HepG2 (cell line): ENCODE measurements at regions of chr4 and their contacts with region 1.

Region 1: GRCh38 chr4:6673660-6674499 is 19.8 kb upstream of the S100P start:
- DNase-seq: peak; percentile 90
- ATAC-seq: peak; percentile 77
- H3K4me3 ChIP-seq: peak overlapping the region; percentile 61 to 78 (median 68); a peak in 5 of 6 replicates
- H3K27ac ChIP-seq: peak overlapping the region; percentile 91
- H3K4me1 ChIP-seq: peaks cover 41% of the 10 kb centered on the region
- H3K27me3 ChIP-seq: no peaks in the 10 kb centered on the region
- CTCF ChIP-seq: peak; percentile 47
- EP300 ChIP-seq: no peak
- POLR2A ChIP-seq: peak in 1 of 2 experiments; percentile 35; a peak in 1 of 4 replicates
- RAD21 ChIP-seq: 0 out of 2 replicates have a peak, but pooled peaks have one; percentile 38

Region 2: DNA sequence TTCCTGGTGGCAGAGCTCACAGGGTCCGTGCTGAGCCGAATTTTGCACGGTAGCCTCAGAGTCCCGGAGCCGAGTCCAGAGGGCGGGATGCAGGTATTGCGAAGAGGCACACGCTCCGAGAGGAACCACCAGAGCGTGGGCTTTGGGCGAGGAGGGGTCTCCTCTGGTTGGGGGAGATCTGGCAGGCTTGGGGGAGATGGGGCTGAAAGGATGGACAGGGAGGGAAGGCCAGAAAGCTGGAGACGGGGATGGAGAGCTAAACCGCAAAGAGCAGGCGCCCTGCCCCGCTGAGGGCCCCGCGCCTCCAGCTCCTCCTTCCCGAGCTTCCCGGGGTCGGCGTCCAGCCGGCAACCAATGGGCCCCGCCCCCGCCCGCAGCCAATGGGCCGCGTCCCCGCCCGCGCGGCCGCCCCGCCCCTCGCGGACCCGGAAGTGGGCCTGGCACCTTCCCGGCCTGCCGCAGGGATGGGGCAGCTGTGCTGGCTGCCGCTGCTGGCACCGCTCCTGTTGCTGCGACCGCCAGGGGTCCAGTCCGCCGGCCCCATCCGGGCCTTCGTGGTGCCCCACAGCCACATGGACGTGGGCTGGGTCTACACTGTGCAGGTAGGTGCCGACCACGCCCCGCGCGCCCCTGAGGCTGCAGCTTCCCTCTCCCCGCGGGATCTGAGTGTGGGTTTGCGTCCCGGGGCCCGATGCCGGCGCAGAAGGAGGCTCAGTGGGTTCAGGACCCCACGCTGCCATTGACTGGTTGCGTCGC is 99.0 kb before region 1 on chr4 and contains the start of gene MAN2B2:
- CTCF ChIA-PET with region 1: no interaction called
- POLR2A ChIA-PET with region 1: interaction called, 11 read pairs
- in situ Hi-C with region 1: no loop called
- intact Hi-C with region 1: no loop called
- DNase-seq: peak; percentile 66
- ATAC-seq: peak; percentile 95
- H3K4me3 ChIP-seq: peak within 1 kb of the TSS; percentile 87 to 98 (median 88)
- H3K27ac ChIP-seq: peak within 1 kb of the TSS; percentile 30
- H3K4me1 ChIP-seq: peaks cover 21% of the 10 kb centered on the region
- H3K27me3 ChIP-seq: peaks cover 2 to 27% of the 10 kb centered on the region in 2 experiments; a peak in 3 of 5 replicates
- CTCF ChIP-seq: no peak
- EP300 ChIP-seq: no peak
- POLR2A ChIP-seq: peak; percentile 79 to 81
- RAD21 ChIP-seq: peak; percentile 22; the same call in 1 of the 2 replicates
- total RNA-seq, gene MAN2B2: 2.8 and 5.4 TPM in 2 replicates

Region 3: DNA sequence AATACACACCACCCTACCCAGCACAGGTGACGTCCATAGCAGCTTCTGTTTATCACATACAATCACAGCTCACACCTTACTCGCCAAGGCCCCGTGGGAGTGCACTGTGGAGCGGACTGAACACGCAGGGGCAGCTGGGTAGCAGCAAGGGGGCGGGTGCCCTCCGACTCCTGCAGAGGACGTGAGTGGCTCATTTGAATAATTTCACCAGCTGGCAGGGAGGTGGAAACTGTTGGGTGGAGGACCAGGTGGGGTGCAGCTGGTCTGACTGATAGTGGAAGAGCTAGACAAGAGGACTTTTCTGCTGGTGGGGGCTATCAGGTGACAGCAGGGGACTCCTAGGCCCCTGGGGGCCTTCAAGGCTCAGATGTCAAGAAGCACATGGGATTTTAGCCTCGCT is 82.6 kb before region 1 on chr4:
- CTCF ChIA-PET with region 1: no interaction called
- POLR2A ChIA-PET with region 1: no interaction called
- in situ Hi-C with region 1: no loop called
- intact Hi-C with region 1: no loop called
- DNase-seq: no peak
- ATAC-seq: no peak
- H3K4me3 ChIP-seq: no peak overlapping the region
- H3K27ac ChIP-seq: no peak overlapping the region
- H3K4me1 ChIP-seq: no peaks in the 10 kb centered on the region
- H3K27me3 ChIP-seq: no peaks in the 10 kb centered on the region
- CTCF ChIP-seq: no peak
- EP300 ChIP-seq: no peak
- POLR2A ChIP-seq: no peak
- RAD21 ChIP-seq: no peak

Region 4: DNA sequence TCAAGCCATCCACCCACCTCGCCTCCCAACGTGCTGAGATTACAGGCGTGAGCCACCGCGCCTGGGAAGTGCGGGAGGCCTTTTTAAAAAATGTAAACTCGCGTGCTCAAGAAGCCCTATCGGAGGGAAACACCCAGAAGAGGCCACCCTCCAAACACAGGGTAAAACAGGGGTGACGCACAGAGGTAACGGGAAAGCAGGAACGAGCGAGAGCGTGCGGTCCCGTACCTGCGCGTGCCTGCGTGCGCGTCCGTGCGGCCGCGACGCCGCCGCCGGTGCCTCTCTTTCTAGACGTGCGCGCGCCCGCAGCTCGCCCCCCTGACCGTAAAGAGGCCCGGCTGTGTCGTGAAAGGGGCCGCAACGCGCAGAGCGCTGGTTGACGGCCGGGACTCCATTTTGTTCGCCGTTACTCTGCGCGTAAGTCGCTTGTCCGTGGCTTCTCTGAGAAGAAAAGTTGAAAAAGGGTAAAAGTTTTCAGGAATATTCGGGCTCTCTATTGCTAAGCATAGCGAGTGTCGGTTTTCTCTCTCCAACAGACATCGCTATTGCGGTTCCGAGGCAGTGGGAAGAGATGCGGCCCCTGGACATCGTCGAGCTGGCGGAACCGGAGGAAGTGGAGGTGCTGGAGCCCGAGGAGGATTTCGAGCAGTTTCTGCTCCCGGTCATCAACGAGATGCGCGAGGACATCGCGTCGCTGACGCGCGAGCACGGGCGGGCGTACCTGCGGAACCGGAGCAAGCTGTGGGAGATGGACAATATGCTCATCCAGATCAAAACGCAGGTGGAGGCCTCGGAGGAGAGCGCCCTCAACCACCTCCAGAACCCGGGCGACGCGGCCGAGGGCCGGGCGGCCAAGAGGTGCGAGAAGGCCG is 33.4 kb before region 1 on chr4 and contains the start of gene MRFAP1:
- CTCF ChIA-PET with region 1: no interaction called
- POLR2A ChIA-PET with region 1: interaction called, 36 read pairs
- in situ Hi-C with region 1: no loop called
- intact Hi-C with region 1: no loop called
- DNase-seq: peak; percentile 86
- ATAC-seq: peak; percentile 91
- H3K4me3 ChIP-seq: peak within 1 kb of the TSS; percentile 67 to 91 (median 74)
- H3K27ac ChIP-seq: peak within 1 kb of the TSS; percentile 84
- H3K4me1 ChIP-seq: peaks cover 38% of the 10 kb centered on the region
- H3K27me3 ChIP-seq: no peaks in the 10 kb centered on the region; a peak in 1 of 5 replicates
- CTCF ChIP-seq: no peak
- EP300 ChIP-seq: no peak; a peak in 1 of 4 replicates
- POLR2A ChIP-seq: peak; percentile 83 to 94
- RAD21 ChIP-seq: no peak
- total RNA-seq, gene MRFAP1: 158 and 254 TPM in 2 replicates

Region 5: GRCh38 chr4:6688879-6689505 is 15.1 kb after region 1 on chr4:
- CTCF ChIA-PET with region 1: interaction called, 10 read pairs
- POLR2A ChIA-PET with region 1: interaction called, 122 read pairs
- in situ Hi-C with region 1: no loop called
- intact Hi-C with region 1: loop called (anchors 2 kb)
- DNase-seq: peak; percentile 91
- ATAC-seq: peak; percentile 62
- H3K4me3 ChIP-seq: peak overlapping the region; percentile 49 to 74 (median 66); a peak in 5 of 6 replicates
- H3K27ac ChIP-seq: peak overlapping the region; percentile 94
- H3K4me1 ChIP-seq: peaks cover 75% of the 10 kb centered on the region
- H3K27me3 ChIP-seq: no peaks in the 10 kb centered on the region; a peak in 1 of 5 replicates
- CTCF ChIP-seq: peak; percentile 44
- EP300 ChIP-seq: peak in 1 of 2 experiments; percentile 53; a peak in 1 of 4 replicates
- POLR2A ChIP-seq: peak in 1 of 2 experiments; percentile 32; a peak in 2 of 4 replicates
- RAD21 ChIP-seq: no peak

Region 6: DNA sequence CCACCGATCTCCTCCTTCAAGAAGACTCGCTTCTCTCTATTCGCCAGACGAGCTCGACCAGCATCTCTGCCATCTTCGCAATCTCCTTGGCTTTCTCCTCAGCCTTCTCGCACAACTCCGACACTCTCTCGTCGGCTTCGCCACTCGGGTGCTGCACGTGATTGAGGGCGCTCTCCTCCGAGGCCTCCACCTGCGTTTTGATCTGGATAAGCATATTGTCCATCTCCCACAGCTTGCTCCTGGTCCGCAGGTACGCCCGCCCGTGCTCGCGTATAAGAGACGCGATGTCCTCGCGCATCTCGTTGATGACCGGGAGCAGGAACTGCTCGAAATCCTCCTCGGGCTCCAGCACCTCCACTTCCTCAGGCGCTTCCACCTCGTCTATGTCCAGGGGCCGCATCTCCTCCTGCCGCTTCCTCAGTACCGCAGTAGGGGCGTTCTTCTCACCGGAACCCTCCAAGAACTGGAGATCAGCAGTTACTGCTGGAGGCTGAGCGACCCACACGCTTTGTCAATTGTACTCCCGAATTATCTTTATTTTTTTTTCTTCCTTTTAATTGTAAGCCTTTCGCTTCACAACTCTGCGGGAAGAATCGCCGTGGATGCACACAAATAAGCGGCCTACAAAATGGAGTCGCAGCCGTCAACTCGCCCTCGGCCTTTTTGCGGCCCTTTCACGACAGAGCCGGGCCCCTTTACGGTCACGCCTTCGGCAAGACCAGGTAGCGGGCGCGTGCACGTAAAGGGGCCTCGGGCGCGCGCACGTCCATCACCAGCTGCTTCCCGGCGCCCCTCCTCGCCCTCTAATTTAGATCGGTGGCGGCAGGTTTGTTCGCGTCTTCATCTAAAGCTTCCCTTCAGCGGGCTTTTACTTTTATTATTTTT is 35.6 kb after region 1 on chr4 and contains the start of gene MRFAP1L1:
- CTCF ChIA-PET with region 1: no interaction called
- POLR2A ChIA-PET with region 1: interaction called, 19 read pairs
- in situ Hi-C with region 1: no loop called
- intact Hi-C with region 1: loop called (anchors 1 kb)
- DNase-seq: peak; percentile 91
- ATAC-seq: peak; percentile 88
- H3K4me3 ChIP-seq: peak within 1 kb of the TSS; percentile 64 to 92 (median 90)
- H3K27ac ChIP-seq: peak within 1 kb of the TSS; percentile 65
- H3K4me1 ChIP-seq: peaks cover 51% of the 10 kb centered on the region
- H3K27me3 ChIP-seq: peaks cover 0 to 6% of the 10 kb centered on the region in 2 experiments; a peak in 1 of 5 replicates
- CTCF ChIP-seq: peak; percentile 26; the same call in 1 of the 2 replicates
- EP300 ChIP-seq: peak in 1 of 2 experiments; percentile 44; a peak in 1 of 4 replicates
- POLR2A ChIP-seq: peak in 1 of 2 experiments; percentile 65; a peak in 2 of 4 replicates
- RAD21 ChIP-seq: no peak
- total RNA-seq, gene MRFAP1L1: 76.6 and 124 TPM in 2 replicates